ENCODE measurements at regions of chr4 and their contacts with region 1.

Region 1: GRCh38 chr4:118772081-118772766 is 63.7 kb downstream of the SEC24D start:
- DNase-seq: no peak

Region 2: DNA sequence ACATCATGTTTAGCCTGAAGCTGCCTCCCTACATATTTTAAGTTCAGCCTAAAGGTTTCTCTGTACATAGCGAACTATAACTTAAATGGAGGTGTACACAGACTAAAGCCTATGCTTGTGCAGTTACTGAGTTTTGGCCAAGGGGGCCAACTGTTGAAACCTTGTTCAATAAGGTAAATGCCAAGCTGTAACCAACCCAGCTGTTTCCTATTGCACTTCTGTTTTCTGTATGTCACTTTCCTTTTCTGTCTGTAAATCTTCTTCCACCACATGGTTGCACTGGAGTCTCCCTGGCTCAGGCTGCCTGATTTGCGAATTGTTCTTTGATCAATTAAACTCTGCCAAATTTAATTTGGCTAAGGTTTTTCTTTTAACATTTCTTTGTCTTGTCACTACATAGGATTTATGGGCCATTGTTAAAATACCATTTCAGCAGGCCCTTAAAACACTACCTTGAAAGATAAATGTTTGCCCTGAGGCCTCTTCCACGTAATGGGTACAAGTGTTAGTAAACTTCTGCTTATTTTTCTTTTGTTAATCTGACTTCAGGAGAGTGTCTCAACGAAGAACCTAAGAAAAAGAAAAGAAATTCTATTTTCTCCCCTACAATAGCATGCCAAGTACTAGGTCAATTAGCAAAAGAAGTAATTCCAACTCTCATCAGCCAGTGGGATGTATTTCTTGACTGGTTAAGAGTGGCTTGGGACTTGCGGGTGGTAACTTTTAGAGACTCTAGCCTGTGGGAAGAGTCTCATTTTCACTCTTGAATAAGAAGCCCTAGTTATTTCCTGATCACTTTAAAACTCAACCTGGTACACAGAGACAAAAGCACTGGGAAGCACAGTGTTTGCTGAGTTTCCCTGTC is 373.8 kb before region 1 on chr4:
- intact Hi-C with region 1: no loop called
- DNase-seq: no peak

Region 3: DNA sequence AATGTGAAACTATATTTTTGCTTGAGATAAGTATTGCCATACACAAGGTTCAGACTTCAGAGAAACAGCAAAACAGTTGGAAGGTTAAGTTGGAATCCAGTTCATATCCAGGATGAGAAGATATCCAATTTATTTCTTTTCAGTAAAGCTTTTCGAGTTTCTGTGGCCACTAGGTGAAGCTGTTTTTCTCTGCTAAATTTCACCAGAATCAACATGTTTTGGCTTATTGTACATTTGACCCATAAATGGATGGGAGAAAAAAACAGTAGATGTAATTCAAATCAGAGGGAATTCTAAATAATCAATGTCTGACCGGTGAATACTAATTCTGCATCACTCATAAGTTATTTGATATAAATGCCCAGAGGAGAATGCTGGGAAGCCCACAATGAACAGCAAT is 96.1 kb before region 1 on chr4:
- intact Hi-C with region 1: no loop called
- DNase-seq: no peak

Region 4: GRCh38 chr4:118888666-118889311 is 116.6 kb after region 1 on chr4 and contains the start of gene SYNPO2:
- intact Hi-C with region 1: loop called (anchors 10 kb)
- DNase-seq: peak; percentile 10 to 74 (median 50)

Measured in head of caudate nucleus (tissue), 42 donors.